ENCODE measurements at regions of chr5 and their contacts with region 1.

Region 1: GRCh38 chr5:141320225-141321169 is at the start of gene TAF7:
- DNase-seq: peak; percentile 93 to 95 (median 95)
- ATAC-seq: peak; percentile 100
- H3K4me3 ChIP-seq: peak within 1 kb of the TSS; percentile 90
- H3K4me1 ChIP-seq: no peaks in the 10 kb centered on the region
- CTCF ChIP-seq: peak; percentile 81
- total RNA-seq, gene TAF7: 52.6 to 70.4 (median 56.9) TPM

Region 2: GRCh38 chr5:141135030-141135717 is 185.3 kb before region 1 on chr5 and contains the start of gene PCDHB5:
- intact Hi-C with region 1: no loop called
- DNase-seq: no peak
- ATAC-seq: no peak
- H3K4me3 ChIP-seq: no peak within 1 kb of the TSS
- H3K4me1 ChIP-seq: no peaks in the 10 kb centered on the region
- CTCF ChIP-seq: no peak
- total RNA-seq, gene PCDHB5: 0.41 to 3.0 (median 0.60) TPM

Region 3: GRCh38 chr5:141564216-141564692 is 243.8 kb after region 1 on chr5:
- intact Hi-C with region 1: loop called in 1 of 2 experiments (anchors 10 kb)
- DNase-seq: peak in 1 of 3 donors; percentile 89
- ATAC-seq: peak; percentile 89
- H3K4me3 ChIP-seq: no peak overlapping the region
- H3K4me1 ChIP-seq: no peaks in the 10 kb centered on the region
- CTCF ChIP-seq: peak; percentile 75